ENCODE measurements at regions of chr18 and their contacts with region 1.

Region 1: GRCh38 chr18:12376718-12377555 is at the start of gene AFG3L2:
- DNase-seq: peak; percentile 100
- H3K4me3 ChIP-seq: peak within 1 kb of the TSS; percentile 69 to 96 (median 82)
- H3K27ac ChIP-seq: peak within 1 kb of the TSS; percentile 97 to 100 (median 99)
- H3K4me1 ChIP-seq: peaks cover 32 to 50% (median 47%) of the 10 kb centered on the region in 4 donors
- H3K27me3 ChIP-seq: no peaks in the 10 kb centered on the region
- CTCF ChIP-seq: no peak
- EP300 ChIP-seq: no peak
- POLR2A ChIP-seq: peak; percentile 88
- total RNA-seq, gene AFG3L2: 39.8 to 47.7 (median 41.7) TPM

Region 2: DNA sequence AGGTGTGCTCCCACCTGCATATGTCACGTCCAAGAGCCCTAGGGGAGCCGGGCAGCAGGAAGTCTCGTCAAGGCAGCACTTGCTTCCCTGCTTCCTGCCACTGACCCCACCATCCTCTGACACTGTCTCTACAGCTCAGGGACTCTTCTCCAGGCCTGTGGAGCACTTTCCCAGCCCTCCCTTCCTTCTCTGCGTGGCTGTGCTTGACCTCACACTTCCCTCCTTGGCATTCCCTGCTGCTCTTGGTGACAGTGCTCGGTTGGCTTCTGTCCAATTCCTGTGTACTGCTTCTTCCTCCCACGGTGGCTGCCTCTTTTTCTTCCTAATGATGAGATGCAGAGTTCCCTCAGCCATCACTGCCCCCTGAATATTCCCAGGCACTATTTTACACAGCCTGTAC is 120.0 kb before region 1 on chr18:
- intact Hi-C with region 1: no loop called
- DNase-seq: no peak
- H3K4me3 ChIP-seq: no peak overlapping the region
- H3K27ac ChIP-seq: no peak overlapping the region
- H3K4me1 ChIP-seq: peaks cover 17 to 23% (median 18%) of the 10 kb centered on the region in 4 donors
- H3K27me3 ChIP-seq: peaks cover 0 to 42% (median 24%) of the 10 kb centered on the region in 4 donors
- CTCF ChIP-seq: no peak
- EP300 ChIP-seq: no peak
- POLR2A ChIP-seq: no peak

Region 3: GRCh38 chr18:12278741-12279682 is 97.9 kb before region 1 on chr18:
- intact Hi-C with region 1: loop called (anchors 5 kb)
- DNase-seq: peak; percentile 94
- H3K4me3 ChIP-seq: peak overlapping the region; percentile 48 to 61 (median 59)
- H3K27ac ChIP-seq: peak overlapping the region; percentile 93 to 98 (median 96)
- H3K4me1 ChIP-seq: peaks cover 18 to 58% (median 56%) of the 10 kb centered on the region in 4 donors
- H3K27me3 ChIP-seq: no peaks in the 10 kb centered on the region
- CTCF ChIP-seq: peak in 2 of 3 experiments; percentile 23 to 24
- EP300 ChIP-seq: peak; percentile 52
- POLR2A ChIP-seq: peak; percentile 43

Region 4: DNA sequence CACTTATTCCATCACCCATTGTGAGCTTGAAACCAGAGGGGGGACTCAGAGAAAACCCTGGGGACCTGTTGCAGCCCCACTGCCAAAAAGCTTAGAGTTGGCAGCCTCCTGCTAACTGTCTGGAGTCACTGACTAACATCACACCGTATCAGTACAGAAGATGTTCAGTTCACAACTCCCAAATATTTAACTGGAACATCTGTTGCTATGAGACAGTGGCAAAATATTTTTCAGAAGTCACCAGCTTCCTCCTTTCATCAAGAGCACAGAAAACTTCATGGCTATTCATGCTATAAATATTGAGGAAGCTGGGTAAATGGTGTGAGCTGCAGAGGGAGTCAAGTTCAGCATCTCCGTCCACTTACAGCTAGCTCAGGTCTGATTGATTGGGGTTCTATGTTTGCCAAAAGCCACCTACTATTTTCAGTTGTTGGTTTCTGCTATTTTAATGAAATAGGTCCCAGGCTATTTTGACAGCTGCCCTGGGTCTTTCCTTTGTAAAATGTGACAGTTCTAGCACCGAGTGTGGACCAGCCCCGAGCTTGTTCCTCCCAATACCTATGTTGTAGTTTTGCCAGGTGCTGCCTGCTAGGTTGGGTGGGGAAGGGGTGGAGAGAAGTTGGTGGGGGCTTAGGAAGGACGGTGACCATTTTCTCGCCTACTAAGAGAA is 59.1 kb before region 1 on chr18:
- intact Hi-C with region 1: loop called (anchors 2 kb)
- DNase-seq: no peak
- H3K4me3 ChIP-seq: peak overlapping the region in 3 of 4 donors; percentile 17 to 18 (median 17)
- H3K27ac ChIP-seq: peak overlapping the region; percentile 77 to 100 (median 82)
- H3K4me1 ChIP-seq: peaks cover 69 to 88% (median 82%) of the 10 kb centered on the region in 4 donors
- H3K27me3 ChIP-seq: no peaks in the 10 kb centered on the region
- CTCF ChIP-seq: no peak
- EP300 ChIP-seq: no peak
- POLR2A ChIP-seq: no peak

Region 5: DNA sequence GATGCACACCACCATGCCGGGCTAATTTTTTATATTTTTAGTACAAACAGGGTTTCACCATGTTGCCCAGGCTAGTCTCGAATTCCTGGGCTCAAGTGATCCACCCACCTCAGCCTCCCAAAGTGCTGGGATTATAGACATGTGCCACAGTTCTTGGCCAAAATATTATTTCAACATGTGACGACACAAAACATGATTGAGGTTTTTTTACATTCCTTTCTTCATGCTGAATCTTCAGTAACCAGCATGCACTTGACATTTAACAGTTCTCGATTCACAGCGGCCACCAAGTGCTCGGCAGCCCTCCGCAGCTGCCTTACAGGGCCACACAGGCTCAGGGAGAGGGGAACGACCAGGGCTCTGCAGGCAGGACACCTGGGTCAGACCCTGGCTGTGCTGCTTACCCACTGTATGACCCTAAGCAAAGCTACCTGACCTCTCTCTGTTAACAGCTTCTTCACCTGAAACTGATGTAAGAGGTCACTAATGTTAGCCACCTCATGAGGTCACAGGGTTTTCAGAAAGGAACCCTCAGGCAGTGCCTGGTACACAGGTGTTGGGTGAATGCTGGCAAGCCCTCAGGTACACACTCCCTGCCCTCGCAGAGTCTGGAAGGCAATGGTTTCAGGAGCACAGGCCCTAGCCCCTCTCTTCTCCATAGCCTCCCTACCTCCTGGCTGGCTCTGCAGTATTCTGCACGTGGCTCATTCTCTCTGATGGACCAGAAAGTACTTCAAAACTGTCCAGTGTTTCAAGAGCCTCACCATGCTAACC is 43.2 kb before region 1 on chr18:
- intact Hi-C with region 1: loop called (anchors 5 kb)
- DNase-seq: no peak
- H3K4me3 ChIP-seq: no peak overlapping the region
- H3K27ac ChIP-seq: peak overlapping the region in 3 of 4 donors; percentile 8 to 32 (median 25)
- H3K4me1 ChIP-seq: peaks cover 27 to 39% (median 28%) of the 10 kb centered on the region in 4 donors
- H3K27me3 ChIP-seq: no peaks in the 10 kb centered on the region
- CTCF ChIP-seq: no peak
- EP300 ChIP-seq: no peak
- POLR2A ChIP-seq: no peak

Region 6: DNA sequence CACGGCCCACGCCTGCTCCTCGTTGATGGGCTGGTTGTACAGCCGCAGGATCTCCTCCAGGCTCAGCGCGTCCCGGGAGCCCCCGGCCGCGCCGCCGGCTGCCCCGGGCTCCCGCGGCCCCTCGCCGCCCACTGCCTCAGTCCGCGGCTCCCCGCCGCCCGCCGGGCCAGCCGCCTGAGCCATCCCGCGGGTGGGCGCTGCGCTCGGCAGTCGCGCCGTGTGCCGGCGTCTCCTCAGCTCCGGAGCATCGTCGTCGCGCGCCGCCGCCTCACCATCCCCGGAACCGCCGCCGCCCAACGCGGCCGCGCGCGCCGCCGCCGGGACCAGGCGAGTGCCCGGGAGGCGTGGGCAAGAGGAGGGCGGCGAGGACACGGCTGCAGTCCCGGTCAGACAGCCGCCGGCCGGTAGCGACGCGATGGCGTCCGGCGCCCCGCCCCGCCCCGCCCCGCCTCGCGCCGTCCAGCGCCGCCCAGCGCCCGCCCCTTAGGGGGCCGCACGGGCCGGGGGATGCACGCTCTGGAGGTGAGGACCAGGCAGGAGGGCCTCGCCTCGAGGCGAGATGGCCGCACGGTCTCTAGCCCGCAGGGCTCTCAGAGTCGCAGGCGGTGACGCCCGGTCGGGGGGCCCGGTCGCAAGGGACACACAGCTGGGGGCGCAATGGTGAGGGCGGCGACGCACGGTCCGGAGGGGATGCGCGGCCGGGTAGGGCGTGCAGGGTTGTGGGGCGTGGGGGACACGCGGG is 280.9 kb after region 1 on chr18 and contains the start of gene SPIRE1:
- intact Hi-C with region 1: loop called (anchors 5 kb)
- DNase-seq: no peak
- H3K4me3 ChIP-seq: peak within 1 kb of the TSS; percentile 87 to 97 (median 90)
- H3K27ac ChIP-seq: peak within 1 kb of the TSS; percentile 97 to 100 (median 100)
- H3K4me1 ChIP-seq: peaks cover 17 to 51% (median 35%) of the 10 kb centered on the region in 4 donors
- H3K27me3 ChIP-seq: no peaks in the 10 kb centered on the region
- CTCF ChIP-seq: peak in 2 of 3 experiments; percentile 3 to 18
- EP300 ChIP-seq: no peak
- POLR2A ChIP-seq: no peak
- total RNA-seq, gene SPIRE1: 33.2 to 48.3 (median 40.2) TPM

Region 7: DNA sequence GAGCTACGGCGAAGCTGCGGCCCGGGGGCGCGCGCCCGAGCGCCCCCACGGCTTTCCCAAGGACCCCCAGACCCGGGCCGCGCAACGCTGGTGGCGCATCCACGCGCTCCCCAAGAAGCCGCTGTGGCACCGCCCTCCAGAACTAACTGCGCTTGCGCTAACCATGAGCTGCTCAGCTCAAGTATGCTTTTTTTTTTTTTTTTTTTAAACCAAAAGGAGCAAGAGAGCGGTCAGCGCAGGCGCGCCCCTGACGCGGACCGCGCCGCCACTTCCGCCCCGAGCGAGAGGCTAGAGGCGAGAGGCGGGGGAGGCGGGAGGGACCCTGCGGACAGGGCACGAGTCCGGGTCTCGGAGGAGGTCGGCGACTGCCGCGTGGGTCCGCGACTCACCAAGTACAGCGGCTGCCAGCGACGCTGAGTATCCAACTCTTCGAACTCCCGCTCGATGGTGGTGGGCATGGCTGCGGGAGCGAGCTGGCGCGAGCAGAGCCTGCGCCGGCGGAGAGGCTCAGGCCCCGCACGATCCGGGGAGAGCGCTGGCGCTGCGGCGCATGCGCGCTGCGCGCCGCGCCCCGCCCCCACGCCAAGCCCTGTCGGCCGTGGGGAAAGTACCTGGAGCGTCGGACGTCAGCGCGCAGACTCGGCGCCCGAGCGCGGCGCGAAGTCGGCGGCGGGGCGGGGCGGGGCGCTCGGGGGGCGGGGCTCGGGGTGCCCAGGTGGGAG is 506.9 kb after region 1 on chr18 and contains the start of gene PTPN2:
- intact Hi-C with region 1: loop called (anchors 10 kb)
- DNase-seq: peak; percentile 95
- H3K4me3 ChIP-seq: peak within 1 kb of the TSS; percentile 72 to 93 (median 76)
- H3K27ac ChIP-seq: peak within 1 kb of the TSS; percentile 97 to 99 (median 98)
- H3K4me1 ChIP-seq: peaks cover 7 to 33% (median 28%) of the 10 kb centered on the region in 4 donors
- H3K27me3 ChIP-seq: no peaks in the 10 kb centered on the region
- CTCF ChIP-seq: no peak
- EP300 ChIP-seq: no peak
- POLR2A ChIP-seq: peak; percentile 87
- total RNA-seq, gene PTPN2: 14.3 to 27.5 (median 18.0) TPM

Region 8: DNA sequence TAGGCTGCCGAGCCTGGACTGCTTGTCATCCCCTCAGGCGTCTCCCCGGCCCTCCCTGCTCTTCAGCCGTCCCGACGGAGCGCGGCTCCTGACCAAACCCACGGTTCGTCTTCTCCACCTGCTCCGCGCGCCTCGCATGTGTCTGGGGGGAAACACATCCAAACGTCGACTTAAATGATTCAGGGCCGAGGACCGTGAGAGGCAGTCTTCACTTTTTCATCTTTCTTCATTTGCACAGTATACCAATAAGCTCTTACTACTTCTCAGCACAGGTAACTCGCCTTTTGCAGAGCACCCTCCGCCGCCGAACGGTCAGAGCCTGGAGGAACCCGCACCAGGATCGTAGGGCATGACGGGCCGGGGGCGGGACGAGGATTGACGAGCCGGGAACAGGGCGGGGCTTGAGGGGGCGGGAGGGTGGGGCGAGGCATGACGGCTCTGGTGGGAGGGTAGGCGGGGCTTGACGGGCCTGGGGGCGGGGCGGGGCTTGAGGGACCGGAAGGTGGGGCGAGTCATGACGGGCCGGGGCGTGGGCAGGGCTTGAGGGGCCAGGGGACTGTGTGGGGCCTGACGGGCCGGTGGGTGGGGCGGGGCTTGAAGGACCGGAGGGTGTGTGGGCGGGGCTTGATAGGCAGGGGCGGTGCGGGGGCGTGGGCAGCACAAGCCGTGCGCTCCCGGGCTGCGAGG is 570.6 kb after region 1 on chr18 and contains the start of gene SEH1L:
- intact Hi-C with region 1: loop called (anchors 10 kb)
- DNase-seq: peak; percentile 100
- H3K4me3 ChIP-seq: peak within 1 kb of the TSS; percentile 67 to 84 (median 70)
- H3K27ac ChIP-seq: peak within 1 kb of the TSS; percentile 89 to 98 (median 96)
- H3K4me1 ChIP-seq: peaks cover 15 to 50% (median 33%) of the 10 kb centered on the region in 4 donors
- H3K27me3 ChIP-seq: no peaks in the 10 kb centered on the region
- CTCF ChIP-seq: no peak
- EP300 ChIP-seq: peak; percentile 13
- POLR2A ChIP-seq: peak; percentile 71
- total RNA-seq, gene SEH1L: 18.0 to 42.6 (median 23.2) TPM

Measured in esophagus muscularis mucosa (tissue), 4 donors.